Esophagus squamous epithelium (tissue), 5 donors: ENCODE measurements at regions of chr10 and their contacts with region 1.

Region 1: DNA sequence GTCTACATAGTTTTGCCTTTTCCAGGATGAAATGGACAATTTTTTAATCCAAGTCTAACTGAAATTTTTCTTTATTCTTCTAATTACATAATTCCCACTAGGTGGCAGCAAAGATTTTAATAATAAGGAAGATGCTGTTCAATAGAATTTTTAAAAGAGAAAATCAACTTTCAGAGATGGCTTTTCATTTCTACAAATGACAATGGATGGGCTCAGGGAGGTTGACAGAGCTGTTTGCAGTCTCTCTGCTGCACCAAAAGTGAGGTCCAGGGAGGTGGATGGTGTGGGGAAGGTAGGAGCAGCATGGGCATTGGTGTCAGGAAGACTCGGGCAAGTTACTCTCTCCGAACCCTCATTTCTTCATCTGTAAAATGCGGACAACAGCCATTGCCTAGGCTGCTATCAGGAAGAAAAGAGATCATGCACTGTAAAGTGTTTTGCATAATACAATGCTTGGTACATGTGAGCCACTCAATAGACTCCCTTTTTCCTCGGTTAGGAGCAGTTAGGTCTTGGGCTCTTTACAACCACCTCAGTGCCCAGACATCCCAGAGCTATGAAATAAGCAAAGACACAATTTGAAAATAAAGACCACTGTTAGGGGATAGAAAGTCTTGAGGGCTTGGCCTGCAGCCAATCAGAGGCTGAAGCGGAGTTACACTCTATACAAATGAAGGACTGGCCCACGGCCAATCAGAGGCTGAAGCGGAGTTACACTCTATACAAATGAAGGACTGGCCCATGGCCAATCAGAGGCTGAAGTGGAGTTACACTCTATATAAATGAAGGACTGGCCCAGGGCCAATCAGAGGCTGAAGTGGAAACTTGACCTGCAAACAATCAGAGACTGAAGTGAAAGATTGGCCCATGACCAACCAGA is 107.1 kb downstream of the ABLIM1 start:
- DNase-seq: no peak
- H3K4me3 ChIP-seq: peak overlapping the region in 3 of 4 donors; percentile 15 to 50 (median 24)
- H3K27ac ChIP-seq: peak overlapping the region; percentile 9 to 73 (median 60)
- H3K4me1 ChIP-seq: peaks cover 5 to 48% (median 13%) of the 10 kb centered on the region in 3 donors
- H3K27me3 ChIP-seq: no peaks in the 10 kb centered on the region
- CTCF ChIP-seq: peak; percentile 13 to 69 (median 46)
- POLR2A ChIP-seq: no peak

Region 2: DNA sequence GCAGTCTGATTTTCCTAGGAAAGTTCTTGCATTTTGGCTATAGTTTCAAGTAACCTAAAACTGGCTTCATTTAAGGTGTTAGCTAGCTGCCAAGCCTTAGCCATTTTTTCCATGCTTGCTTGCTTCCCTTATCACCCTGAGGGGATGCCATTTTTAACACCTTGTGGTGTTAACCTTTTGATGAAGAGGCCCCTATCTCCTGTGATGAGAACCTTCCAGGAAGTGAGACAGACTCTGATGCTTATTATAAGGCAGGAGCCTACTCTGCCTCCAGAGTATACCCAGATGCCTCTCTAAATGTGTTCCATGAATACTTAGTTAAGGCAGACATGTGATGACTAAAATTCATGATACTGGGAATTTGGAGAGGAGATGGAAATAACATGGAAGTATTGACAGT is 316.9 kb before region 1 on chr10:
- intact Hi-C with region 1: no loop called
- DNase-seq: no peak
- H3K4me3 ChIP-seq: no peak overlapping the region
- H3K27ac ChIP-seq: no peak overlapping the region
- H3K4me1 ChIP-seq: peaks cover 1 to 7% (median 3%) of the 10 kb centered on the region in 3 donors
- H3K27me3 ChIP-seq: peaks cover 0 to 57% (median 0%) of the 10 kb centered on the region in 4 donors
- CTCF ChIP-seq: no peak
- POLR2A ChIP-seq: no peak

Region 3: DNA sequence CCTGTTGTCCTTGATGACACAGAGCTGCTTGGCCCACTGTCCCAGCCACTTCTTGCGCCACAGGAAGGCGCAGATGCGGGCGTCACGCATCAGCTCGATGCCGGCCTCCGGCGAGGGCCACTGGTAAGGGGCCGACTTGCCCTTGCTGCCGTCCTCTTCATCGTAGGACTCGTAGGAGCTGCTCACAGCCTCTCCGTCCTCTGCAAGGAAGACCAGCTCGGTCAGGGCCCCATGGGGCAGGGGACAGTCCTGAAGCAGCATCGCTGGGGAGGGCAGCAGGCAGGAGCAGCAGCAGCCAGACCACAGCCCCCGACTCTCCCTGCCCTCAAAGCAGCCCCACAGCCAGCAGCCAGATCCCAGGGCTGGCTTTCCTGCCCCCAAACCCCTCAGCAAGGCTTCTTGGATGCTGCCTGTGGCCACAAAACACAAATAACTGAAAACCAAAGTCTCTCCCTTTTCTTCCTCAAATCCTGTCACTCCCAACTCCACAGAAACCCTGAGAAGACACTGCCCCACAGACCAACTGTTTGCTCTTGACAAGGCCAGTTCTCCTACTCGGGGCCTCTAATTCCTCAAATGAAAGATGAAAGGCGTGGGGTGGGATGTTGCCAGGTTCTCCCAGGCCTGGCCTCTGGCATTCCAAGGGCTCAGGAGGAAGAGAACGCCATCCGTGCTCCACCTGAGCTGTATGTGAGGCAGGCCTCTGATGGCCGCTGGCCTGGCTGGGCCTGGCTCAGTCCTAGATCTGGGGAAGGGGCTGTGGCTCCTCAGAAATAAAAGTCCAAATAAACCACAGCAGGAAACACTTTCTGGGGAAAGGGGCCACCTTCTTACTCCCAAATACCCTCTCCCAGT is 235.2 kb before region 1 on chr10:
- intact Hi-C with region 1: loop called (anchors 10 kb)
- DNase-seq: no peak
- H3K4me3 ChIP-seq: no peak overlapping the region
- H3K27ac ChIP-seq: no peak overlapping the region
- H3K4me1 ChIP-seq: peaks cover 0 to 24% (median 7%) of the 10 kb centered on the region in 3 donors
- H3K27me3 ChIP-seq: no peaks in the 10 kb centered on the region
- CTCF ChIP-seq: no peak
- POLR2A ChIP-seq: no peak

Region 4: GRCh38 chr10:114470956-114471905 is 79.8 kb before region 1 on chr10:
- intact Hi-C with region 1: loop called (anchors 5 kb)
- DNase-seq: no peak
- H3K4me3 ChIP-seq: no peak overlapping the region
- H3K27ac ChIP-seq: peak overlapping the region in 2 of 4 donors; percentile 34 to 58
- H3K4me1 ChIP-seq: peaks cover 0 to 27% (median 0%) of the 10 kb centered on the region in 3 donors
- H3K27me3 ChIP-seq: no peaks in the 10 kb centered on the region
- CTCF ChIP-seq: peak; percentile 82 to 93 (median 89)
- POLR2A ChIP-seq: no peak

Region 5: GRCh38 chr10:114694752-114695151 is 143.8 kb after region 1 on chr10:
- intact Hi-C with region 1: loop called (anchors 5 kb)
- DNase-seq: no peak
- H3K4me3 ChIP-seq: no peak overlapping the region
- H3K27ac ChIP-seq: no peak overlapping the region
- H3K4me1 ChIP-seq: peaks cover 0 to 34% (median 6%) of the 10 kb centered on the region in 3 donors
- H3K27me3 ChIP-seq: no peaks in the 10 kb centered on the region
- CTCF ChIP-seq: peak in 5 of 6 experiments; percentile 28 to 67 (median 37)
- POLR2A ChIP-seq: no peak

Region 6: DNA sequence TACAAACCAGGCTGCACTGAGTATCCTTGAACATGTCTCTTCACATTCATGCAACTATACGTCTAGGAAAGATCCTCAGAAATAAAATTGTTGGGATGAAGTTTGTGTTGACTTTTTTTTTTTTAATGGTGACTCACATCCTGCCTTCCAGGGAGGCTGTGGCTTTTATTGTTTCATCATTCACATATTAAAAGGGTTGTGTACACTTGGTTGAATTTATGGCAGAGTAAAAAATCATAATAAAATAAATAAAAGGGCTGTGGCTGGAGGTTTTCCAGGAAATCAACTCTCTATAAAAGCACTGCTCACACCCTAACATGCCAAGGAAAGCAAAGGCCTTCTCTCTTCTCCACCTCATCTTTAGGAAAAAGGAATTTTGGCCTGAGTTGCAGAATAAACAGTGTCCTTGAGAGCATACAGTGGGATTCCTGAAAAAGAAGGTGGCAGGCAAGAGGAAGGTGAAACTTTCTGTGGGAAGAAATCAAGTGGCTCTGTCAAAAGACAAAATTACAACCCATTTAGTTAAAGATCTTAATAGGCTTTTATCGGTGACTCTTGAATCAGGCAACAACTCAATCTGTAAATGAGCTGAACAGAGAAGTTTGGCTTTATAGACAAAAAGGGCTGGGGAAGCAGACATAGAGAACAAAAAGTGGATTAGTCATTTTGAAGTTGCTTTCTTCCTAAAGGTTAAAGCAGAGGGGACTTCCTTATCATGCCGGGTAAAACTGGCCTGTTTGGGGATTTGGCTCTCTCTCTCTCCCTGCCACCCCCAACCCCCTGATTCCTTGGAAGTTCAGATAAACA is 229.0 kb after region 1 on chr10:
- intact Hi-C with region 1: loop called (anchors 10 kb)
- DNase-seq: no peak
- H3K4me3 ChIP-seq: no peak overlapping the region
- H3K27ac ChIP-seq: peak overlapping the region; percentile 31 to 69 (median 52)
- H3K4me1 ChIP-seq: peaks cover 5 to 23% (median 5%) of the 10 kb centered on the region in 3 donors
- H3K27me3 ChIP-seq: no peaks in the 10 kb centered on the region
- CTCF ChIP-seq: no peak
- POLR2A ChIP-seq: no peak

Region 7: GRCh38 chr10:115624448-115624847 is 1073.5 kb after region 1 on chr10:
- intact Hi-C with region 1: no loop called
- DNase-seq: no peak
- H3K4me3 ChIP-seq: no peak overlapping the region
- H3K27ac ChIP-seq: no peak overlapping the region
- H3K4me1 ChIP-seq: no peaks in the 10 kb centered on the region
- H3K27me3 ChIP-seq: no peaks in the 10 kb centered on the region
- CTCF ChIP-seq: no peak
- POLR2A ChIP-seq: no peak